ENCODE measurements at regions of chr1 and their contacts with region 1.

Region 1: DNA sequence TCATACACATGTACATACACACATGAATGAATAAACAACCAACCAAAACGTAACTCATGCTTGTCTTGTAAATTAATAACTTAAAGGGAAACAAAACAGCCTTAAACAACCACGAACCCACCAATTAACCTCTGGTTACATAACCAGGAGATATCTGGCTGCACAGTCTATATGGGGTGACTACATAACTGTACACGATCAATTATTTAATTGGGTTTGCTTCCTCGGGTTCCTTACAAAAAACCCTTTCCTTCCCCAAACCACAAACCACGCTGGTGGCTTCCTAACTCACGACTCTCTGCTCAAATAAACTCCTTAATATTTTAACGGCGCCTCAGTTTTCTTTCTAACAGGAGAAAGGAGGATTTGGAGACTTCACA is 740 bp downstream of the ZNF670 start:
- DNase-seq: peak; percentile 5
- ATAC-seq: no peak
- H3K4me3 ChIP-seq: peak overlapping the region; percentile 91
- H3K27ac ChIP-seq: peak overlapping the region; percentile 70
- H3K4me1 ChIP-seq: peaks cover 4% of the 10 kb centered on the region; the same call in 1 of the 2 replicates
- H3K27me3 ChIP-seq: no peaks in the 10 kb centered on the region
- CTCF ChIP-seq: no peak
- POLR2A ChIP-seq: no peak
- RAD21 ChIP-seq: no peak

Region 2: DNA sequence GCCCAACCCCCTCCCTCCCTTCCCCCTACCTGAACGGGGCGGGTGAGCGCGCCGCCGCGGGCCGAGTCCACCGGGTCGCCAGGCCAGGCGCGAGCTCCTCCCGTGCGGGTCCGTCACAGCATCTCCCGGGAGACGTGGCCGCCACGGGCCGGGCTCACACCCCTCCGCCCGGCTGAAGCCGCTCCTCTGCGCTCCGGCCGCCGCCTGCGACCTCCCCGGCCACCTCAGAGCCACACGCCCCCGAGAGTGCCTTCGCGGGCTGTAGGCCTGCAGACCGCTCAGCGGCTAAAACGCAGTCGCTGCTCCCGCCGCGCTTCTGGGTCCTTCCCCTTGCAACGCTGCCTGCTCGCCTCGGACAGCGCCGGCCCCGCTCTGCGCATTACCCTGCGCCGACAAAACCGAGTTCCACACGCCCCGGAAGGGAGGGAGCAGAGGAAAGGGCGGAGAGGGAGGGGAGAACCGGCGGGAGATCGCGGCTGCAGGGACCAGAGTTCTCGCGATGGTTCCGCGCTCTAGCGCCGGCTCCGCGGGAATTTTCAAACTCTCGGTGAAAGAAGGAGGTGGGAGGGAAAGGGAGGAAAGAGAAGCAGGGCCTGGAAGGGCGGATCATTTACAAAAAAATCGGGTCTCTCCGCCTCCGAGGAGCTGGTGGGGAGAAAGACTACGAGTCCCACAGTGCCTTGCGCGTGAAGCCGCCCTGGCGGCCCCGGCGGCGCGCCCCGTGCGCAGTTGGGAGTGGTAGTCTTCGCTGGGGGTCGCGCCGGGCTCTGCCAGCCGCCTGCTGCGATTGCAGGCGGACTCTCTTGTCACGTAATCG is 146.1 kb before region 1 on chr1 and contains the start of gene AHCTF1:
- CTCF ChIA-PET with region 1: no interaction called
- POLR2A ChIA-PET with region 1: no interaction called
- dilution Hi-C with region 1: no loop called
- in situ Hi-C with region 1: no loop called
- intact Hi-C with region 1: loop called (anchors 2 kb)
- DNase-seq: peak; percentile 97
- ATAC-seq: peak; percentile 96
- H3K4me3 ChIP-seq: peak within 1 kb of the TSS; percentile 76
- H3K27ac ChIP-seq: peak within 1 kb of the TSS; percentile 65
- H3K4me1 ChIP-seq: no peaks in the 10 kb centered on the region
- H3K27me3 ChIP-seq: no peaks in the 10 kb centered on the region
- CTCF ChIP-seq: 0 out of 2 replicates have a peak, but pooled peaks have one; percentile 6
- POLR2A ChIP-seq: peak; percentile 96
- RAD21 ChIP-seq: no peak
- total RNA-seq, gene AHCTF1: 29.0 and 40.3 TPM in 2 replicates

Region 3: DNA sequence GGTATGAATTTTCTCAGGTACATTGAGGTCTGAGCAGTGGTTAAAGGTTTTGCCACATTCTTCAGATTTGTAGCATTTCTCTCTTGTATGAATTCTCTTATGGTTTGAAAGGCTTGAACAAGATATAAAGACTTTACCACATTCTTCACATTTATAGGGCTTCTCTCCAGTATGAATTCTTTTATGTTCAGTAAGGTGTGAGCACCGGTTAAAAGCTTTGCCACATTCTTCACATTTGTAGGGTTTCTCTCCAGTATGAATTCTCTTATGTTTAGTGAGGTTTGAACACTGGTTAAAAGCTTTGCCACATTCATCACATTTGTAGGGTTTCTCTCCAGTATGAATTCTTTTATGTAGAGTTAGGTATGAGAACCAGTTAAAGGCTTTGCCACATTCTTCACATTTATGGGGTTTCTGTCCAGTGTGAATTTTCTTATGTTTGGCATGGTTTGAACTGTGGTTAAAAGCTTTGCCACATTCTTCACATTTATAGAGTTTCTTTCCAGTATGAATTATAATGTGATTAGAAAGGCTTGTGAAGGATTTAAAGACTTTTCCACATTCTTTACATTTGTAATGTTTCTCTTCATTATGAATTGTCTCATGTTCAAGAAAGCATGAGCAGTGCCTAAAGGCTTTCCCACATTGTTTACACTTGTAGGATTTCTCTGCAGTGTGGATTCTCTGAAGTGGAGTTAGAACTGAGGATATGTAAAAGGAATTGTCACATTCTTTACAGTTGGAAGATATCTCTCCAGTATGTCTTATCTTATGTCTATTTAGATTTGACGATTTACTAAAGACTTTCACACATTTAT is 112.3 kb after region 1 on chr1:
- CTCF ChIA-PET with region 1: no interaction called
- POLR2A ChIA-PET with region 1: no interaction called
- dilution Hi-C with region 1: no loop called
- in situ Hi-C with region 1: no loop called
- intact Hi-C with region 1: no loop called
- DNase-seq: no peak
- ATAC-seq: no peak
- H3K4me3 ChIP-seq: no peak overlapping the region
- H3K27ac ChIP-seq: no peak overlapping the region
- H3K4me1 ChIP-seq: no peaks in the 10 kb centered on the region
- H3K27me3 ChIP-seq: no peaks in the 10 kb centered on the region
- CTCF ChIP-seq: no peak
- POLR2A ChIP-seq: no peak
- RAD21 ChIP-seq: no peak

Measured in IMR-90 (cell line).